Psoas muscle (tissue), 8 donors: ENCODE measurements at regions of chr3 and their contacts with region 1.

Region 1: DNA sequence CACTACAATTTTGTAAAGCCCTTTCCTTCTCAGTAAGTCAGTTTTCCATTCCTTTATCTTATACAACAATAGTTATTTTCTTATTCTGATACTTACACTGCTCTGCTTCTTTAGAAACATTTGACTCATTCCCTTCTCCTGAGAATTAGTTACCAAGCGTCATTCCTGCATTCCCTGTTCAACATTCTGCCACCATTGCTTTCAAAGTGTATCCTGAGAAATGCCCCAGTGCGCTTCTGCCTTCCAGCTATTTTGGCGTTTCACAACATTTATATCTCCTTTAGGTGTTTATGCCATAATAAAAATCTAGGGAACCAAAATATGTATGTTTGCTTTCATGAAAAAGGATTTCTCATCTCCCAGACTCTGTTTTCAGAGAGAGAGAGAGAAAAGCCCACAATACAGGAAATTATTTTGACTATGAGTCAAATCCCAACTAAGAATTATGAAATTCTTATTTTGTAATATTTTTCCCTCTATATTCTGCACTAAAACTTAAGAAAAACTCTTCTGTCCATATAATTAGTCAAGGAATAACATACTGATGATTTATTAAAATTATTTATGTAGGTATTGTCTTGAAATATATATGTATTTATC is 118.2 kb upstream of the RAP2B start:
- DNase-seq: no peak
- ATAC-seq: no peak
- H3K4me3 ChIP-seq: no peak overlapping the region
- H3K27ac ChIP-seq: no peak overlapping the region
- H3K4me1 ChIP-seq: no peaks in the 10 kb centered on the region
- H3K27me3 ChIP-seq: peaks cover 0 to 3% (median 0%) of the 10 kb centered on the region in 3 donors
- CTCF ChIP-seq: no peak

Region 2: GRCh38 chr3:153087595-153088566 is 44.1 kb after region 1 on chr3:
- intact Hi-C with region 1: no loop called
- DNase-seq: no peak
- ATAC-seq: no peak
- H3K4me3 ChIP-seq: no peak overlapping the region
- H3K27ac ChIP-seq: no peak overlapping the region
- H3K4me1 ChIP-seq: no peaks in the 10 kb centered on the region
- H3K27me3 ChIP-seq: no peaks in the 10 kb centered on the region
- CTCF ChIP-seq: no peak

Region 3: GRCh38 chr3:153291056-153291685 is 247.3 kb after region 1 on chr3:
- intact Hi-C with region 1: loop called in 1 of 2 experiments (anchors 10 kb)
- DNase-seq: no peak
- ATAC-seq: no peak
- H3K4me3 ChIP-seq: no peak overlapping the region
- H3K27ac ChIP-seq: no peak overlapping the region
- H3K4me1 ChIP-seq: no peaks in the 10 kb centered on the region
- H3K27me3 ChIP-seq: no peaks in the 10 kb centered on the region
- CTCF ChIP-seq: peak; percentile 24

Region 4: DNA sequence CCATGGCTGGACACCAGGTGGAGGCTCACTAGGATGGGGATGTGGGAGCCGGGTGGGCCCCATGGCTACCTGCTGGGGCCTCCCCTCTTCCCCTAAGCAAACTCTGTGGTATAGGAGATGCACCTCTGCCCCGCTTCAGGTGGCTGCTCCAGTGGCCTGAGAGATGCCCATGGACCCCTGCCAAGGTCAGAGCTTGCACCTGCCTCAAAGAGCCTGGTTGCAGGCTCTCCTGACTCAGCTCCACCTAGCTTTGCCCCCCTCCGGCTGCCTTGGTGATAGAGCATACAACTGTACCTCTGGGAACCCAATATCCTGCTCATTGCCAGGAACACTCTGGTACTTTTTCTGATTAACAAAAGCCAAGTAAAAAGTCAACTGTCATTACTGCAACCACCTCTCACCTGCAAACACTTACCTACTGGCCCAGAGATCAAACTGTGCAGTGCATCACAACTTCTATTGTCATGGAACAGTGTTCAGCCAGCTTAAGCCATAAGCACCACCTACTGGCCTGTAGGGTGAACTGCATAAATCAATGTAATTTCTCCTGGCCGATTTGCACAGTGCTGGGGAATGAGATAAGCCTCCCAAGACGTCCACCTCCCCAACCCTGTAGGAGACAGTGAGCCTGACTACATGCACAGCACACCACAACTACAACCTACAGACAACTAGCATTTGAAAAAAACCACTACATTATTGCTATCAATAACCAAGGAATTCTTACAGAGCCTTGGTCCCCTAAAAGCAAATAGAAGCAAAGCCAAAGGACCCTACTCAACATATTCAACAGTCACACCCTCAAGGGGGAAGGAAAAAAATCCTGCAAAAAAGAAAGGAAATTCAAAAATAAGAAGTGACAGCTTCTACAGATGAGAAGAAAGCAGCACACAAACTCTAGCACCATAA is 725.0 kb after region 1 on chr3:
- intact Hi-C with region 1: loop called (anchors 5 kb)
- DNase-seq: no peak
- ATAC-seq: peak in 2 of 4 donors; percentile 54 to 60
- H3K4me3 ChIP-seq: no peak overlapping the region
- H3K27ac ChIP-seq: no peak overlapping the region
- H3K4me1 ChIP-seq: no peaks in the 10 kb centered on the region
- H3K27me3 ChIP-seq: peaks cover 0 to 3% (median 0%) of the 10 kb centered on the region in 3 donors
- CTCF ChIP-seq: peak; percentile 58

Region 5: DNA sequence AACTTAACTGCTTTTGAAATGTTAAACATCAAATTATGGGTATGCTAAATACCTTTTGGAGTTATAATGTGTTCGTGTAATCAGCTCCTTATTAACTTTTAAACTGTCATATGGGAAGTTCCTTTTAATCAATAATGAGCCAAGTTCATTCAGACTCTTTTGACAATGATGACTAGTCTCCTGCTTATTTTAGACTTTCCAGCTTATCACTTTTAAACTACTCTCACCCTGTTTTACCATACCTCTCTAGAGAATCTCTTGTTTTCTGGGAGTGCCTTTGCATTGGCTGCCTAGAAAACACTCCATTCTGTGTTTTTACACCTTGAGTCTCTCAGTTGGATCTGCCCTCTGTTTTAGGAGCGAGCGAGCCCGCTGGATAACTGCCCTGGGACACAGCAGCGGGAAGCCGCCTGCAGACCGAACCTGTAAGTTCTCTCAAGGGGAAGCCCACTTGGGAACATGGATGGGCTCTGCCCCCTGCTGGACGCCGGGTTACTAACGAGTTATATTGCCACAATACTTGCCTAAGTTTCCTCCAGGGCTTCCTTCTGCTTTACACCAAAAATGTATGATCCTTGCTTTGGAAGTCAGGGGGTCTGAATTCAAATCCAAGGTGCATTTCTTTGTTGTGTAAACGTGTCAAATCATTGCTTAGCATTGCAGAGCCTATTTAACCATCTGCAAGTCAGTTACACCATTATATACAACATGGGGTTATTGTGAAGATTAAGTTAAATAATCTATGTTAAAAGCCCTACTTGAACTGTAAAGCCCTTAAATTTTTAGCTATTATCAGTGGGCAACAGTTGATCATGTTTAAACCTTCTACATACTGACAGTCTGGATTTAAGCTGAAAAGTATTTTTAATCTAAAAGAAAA is 1209.2 kb after region 1 on chr3:
- intact Hi-C with region 1: loop called in 1 of 2 experiments (anchors 10 kb)
- DNase-seq: peak; percentile 87 to 89
- ATAC-seq: peak; percentile 51 to 80 (median 73)
- H3K4me3 ChIP-seq: no peak overlapping the region
- H3K27ac ChIP-seq: no peak overlapping the region
- H3K4me1 ChIP-seq: no peaks in the 10 kb centered on the region
- H3K27me3 ChIP-seq: no peaks in the 10 kb centered on the region
- CTCF ChIP-seq: peak; percentile 73